ENCODE measurements at regions of chr18 and their contacts with region 1.

Region 1: GRCh38 chr18:11947214-11948191 is 33.8 kb upstream of the IMPA2 start:
- DNase-seq: peak; percentile 70
- CTCF ChIP-seq: no peak

Region 2: DNA sequence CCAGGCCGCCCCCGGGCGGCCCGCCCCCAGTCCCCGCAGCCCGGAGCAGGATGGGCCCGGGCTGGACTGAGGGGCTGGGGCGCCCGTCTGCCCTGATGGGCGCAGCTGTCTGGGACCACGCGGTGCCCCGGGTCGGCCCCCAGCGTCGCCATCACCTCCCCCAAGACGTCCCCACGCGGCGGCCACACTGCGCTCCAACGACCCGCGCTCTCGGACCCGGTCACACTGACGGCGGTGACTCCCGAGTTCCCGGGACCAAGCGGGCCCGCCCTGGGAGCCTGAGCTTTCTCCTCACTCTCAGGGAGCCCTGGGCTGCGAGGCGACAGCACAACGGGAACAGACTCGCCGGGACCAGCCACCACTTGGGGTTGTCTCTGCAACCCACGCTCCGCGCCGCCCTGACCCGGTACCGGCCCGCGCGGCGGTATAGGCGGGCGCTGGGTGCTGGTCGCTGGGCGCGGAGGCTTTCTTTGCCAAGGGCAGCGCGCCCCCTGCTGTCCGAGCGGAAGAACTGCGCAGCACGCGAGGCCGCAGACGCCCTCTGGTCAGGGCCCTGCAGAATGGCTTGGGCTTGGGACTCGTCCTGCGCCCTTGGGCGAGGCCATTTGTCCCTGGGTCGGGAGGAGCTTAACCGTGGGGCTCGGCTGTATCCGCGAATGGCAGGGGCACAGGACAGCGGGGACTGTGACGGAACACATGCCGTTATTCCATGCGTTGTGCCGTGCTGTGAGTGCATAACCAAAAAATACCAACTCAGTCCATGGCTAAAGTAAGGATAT is 91.3 kb after region 1 on chr18:
- in situ Hi-C with region 1: loop called (anchors 25 kb)
- DNase-seq: peak; percentile 91
- CTCF ChIP-seq: peak; percentile 100

Region 3: GRCh38 chr18:12076424-12077140 is 129.1 kb after region 1 on chr18:
- in situ Hi-C with region 1: no loop called
- DNase-seq: peak; percentile 51
- CTCF ChIP-seq: no peak

Region 4: DNA sequence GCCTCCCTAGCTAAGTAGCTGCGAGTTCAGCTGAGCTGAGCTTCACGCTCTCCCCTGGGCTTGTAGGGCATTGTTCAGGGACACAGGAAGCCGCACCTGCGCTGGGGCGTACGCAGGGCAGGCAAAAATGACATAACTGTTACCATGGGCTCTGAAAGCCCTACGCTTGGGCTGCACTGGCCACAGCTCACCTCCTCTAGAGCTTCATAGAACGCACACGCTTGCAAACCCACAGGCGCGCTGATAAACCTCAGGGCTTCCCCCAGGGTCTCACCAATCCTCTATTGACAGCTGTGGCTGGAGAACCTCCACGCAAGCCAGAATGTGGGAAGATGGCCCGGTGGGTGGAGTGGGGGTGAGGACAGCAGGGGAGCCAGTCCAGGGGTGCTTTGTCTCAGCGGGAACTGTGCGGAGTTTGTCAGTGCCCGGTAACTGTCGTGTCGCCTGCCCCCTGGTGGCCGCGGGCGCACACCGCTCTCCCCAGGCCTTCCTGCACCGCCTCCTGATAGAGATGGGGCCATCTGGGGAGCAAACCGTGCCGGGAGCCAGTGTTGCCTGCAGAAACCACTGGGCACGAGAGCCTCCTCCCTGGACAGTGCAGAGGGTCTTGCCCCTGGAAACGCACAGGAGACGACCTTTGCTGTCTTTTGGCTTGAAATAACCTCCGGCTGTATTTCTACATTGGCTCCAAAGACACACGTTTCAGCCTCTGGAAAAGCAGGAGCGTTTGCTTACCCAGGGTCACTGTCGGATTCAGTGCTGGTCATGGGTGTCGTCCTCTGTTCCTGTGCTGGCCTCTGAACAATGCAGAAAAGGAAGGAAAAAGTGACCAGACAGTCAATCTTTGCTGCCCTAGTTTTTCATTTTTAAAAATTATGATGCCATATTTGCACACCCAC is 289.7 kb after region 1 on chr18:
- in situ Hi-C with region 1: loop called (anchors 25 kb)
- DNase-seq: peak; percentile 86
- CTCF ChIP-seq: peak; percentile 97

Region 5: DNA sequence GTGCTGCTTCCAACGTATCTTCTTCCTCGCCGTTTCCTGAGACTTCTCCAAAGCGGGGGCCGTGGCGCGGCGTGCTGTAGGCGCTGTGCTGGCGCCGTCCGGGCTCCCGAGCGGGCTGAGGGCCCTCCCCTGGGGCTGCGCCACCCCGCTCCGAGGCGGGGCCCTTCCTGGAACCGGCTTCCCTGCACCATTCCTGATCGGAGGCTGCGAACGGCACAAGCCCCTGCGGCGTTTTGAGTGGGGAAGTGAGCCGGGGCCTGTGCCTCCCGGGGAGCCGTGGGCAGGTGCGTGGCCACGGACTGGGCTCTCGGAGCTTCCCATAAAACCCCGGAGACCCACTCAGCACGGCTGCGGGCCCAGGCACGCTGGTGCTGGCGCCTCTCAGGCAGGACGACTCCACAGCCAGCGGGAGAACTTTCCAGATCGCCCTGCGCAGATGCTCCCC is 830.0 kb after region 1 on chr18:
- in situ Hi-C with region 1: no loop called
- DNase-seq: no peak
- CTCF ChIP-seq: no peak

Measured in GM13977 (cell line).